ENCODE measurements at regions of chr12 and their contacts with region 1.

Region 1: DNA sequence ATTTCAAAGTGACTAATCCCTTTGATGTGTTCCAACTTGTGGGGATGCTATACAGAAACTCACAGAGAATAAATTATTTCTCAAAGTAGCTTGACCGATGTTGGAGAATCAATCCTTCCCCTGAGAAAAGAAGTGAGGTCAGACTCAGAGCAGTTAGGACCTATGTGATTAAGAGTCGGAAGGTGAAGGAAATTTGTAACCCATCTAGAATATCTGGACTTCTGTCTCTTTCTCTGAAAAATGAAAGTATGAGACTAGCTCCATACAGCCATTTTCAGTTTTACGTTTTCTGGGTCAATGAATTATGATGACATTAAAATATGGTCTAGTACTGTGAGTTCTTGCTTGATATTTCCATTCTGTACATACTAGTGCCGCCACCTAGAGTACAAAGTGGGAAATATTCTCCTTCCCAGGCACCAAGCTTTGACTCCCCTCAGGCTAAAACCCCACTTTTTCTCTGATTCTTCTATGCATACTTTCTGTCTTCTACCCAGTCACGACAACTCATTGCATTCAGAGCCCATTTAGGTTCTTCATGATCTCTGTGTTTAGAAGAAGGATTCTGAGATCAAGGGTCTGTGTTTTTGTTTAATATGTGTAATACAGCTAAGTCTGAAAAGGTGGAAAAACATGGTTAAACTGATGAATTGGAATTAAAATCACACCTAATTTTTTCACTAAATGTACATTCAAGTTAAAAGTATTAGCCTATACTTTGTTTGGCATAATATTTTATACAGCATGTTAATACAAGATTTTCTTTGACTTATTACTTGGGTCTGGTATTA is 6.9 kb upstream of the NTS start:
- DNase-seq: no peak
- H3K4me3 ChIP-seq: no peak overlapping the region
- H3K27me3 ChIP-seq: no peaks in the 10 kb centered on the region
- CTCF ChIP-seq: peak; percentile 70

Region 2: GRCh38 chr12:85468356-85469157 is 398.6 kb before region 1 on chr12:
- CTCF ChIA-PET with region 1: interaction called, 49 read pairs
- POLR2A ChIA-PET with region 1: no interaction called
- DNase-seq: peak; percentile 10
- H3K4me3 ChIP-seq: peak overlapping the region; percentile 21
- H3K27me3 ChIP-seq: no peaks in the 10 kb centered on the region
- CTCF ChIP-seq: peak; percentile 84

Region 3: DNA sequence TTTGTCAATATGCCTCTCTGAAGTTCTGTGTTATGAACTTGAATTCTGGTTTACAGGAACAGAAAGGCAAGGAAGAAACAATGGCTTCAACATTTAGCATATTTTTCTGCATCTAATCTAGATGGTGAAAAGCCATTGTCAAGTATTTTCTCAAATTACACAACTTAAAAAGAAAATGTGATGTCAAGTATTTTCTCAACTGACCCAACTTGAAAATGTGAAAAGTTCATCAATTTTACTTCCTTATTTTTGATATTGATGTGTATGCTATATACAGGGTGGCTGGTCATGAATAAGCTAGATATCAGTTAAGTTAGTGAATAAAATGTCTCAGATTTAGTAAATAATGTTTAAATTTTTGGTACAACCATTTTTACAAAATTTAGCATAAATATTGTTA is 390.4 kb before region 1 on chr12:
- CTCF ChIA-PET with region 1: interaction called, 29 read pairs
- POLR2A ChIA-PET with region 1: no interaction called
- DNase-seq: no peak
- H3K4me3 ChIP-seq: no peak overlapping the region
- H3K27me3 ChIP-seq: no peaks in the 10 kb centered on the region
- CTCF ChIP-seq: no peak

Region 4: GRCh38 chr12:85484387-85484786 is 382.8 kb before region 1 on chr12:
- CTCF ChIA-PET with region 1: interaction called, 10 read pairs
- POLR2A ChIA-PET with region 1: no interaction called
- DNase-seq: no peak
- H3K4me3 ChIP-seq: no peak overlapping the region
- H3K27me3 ChIP-seq: no peaks in the 10 kb centered on the region
- CTCF ChIP-seq: no peak

Region 5: DNA sequence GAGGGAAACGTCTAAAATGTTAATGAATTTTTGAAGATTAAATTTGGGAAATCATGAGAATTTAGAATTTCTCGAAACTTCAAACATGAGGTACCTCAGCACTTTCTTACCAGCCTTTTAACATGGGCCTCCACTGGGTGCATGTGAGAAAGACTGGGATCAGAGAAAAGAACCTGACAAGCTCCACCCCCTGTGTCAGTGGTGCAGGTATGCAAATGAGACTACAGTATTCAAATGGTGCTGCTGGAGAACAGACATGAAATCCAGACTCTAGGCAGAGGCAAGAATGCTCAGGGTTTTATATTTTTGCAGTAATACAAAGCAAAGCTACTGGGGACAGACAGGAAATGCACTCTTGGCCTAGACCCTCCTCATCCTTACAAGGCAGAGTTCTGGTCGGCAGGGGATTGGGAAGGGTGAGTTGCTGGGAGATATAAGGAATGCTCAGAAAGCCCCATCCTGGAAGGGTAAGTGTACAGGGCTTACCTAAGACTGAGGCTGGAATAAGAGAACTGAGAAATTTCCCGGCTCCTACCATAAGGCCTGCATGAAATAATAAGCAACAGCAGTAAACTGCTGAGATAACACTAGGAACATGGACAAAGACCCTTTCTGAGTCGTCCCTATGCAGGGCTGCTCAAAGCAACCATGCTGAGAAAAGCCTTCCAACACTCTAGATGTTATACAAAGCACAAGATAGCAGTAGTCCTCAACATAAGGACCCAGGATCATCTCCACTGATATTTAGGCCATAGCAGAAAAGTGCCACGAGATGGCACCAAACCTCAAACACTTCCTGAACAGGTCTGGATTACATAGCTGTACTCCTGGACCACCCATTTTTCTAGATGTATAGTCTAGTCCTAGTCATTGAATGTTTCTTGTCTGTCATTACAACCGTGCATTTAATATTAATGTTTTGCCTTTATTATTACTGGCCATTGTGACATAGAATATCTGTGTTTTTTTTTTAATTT is 291.8 kb before region 1 on chr12:
- CTCF ChIA-PET with region 1: interaction called, 42 read pairs
- POLR2A ChIA-PET with region 1: interaction called, 3 read pairs
- DNase-seq: no peak
- H3K4me3 ChIP-seq: no peak overlapping the region
- H3K27me3 ChIP-seq: no peaks in the 10 kb centered on the region
- CTCF ChIP-seq: peak; percentile 83

Region 6: GRCh38 chr12:85725991-85726390 is 141.2 kb before region 1 on chr12:
- CTCF ChIA-PET with region 1: no interaction called
- POLR2A ChIA-PET with region 1: no interaction called
- DNase-seq: no peak
- H3K4me3 ChIP-seq: no peak overlapping the region
- H3K27me3 ChIP-seq: no peaks in the 10 kb centered on the region
- CTCF ChIP-seq: no peak

Region 7: DNA sequence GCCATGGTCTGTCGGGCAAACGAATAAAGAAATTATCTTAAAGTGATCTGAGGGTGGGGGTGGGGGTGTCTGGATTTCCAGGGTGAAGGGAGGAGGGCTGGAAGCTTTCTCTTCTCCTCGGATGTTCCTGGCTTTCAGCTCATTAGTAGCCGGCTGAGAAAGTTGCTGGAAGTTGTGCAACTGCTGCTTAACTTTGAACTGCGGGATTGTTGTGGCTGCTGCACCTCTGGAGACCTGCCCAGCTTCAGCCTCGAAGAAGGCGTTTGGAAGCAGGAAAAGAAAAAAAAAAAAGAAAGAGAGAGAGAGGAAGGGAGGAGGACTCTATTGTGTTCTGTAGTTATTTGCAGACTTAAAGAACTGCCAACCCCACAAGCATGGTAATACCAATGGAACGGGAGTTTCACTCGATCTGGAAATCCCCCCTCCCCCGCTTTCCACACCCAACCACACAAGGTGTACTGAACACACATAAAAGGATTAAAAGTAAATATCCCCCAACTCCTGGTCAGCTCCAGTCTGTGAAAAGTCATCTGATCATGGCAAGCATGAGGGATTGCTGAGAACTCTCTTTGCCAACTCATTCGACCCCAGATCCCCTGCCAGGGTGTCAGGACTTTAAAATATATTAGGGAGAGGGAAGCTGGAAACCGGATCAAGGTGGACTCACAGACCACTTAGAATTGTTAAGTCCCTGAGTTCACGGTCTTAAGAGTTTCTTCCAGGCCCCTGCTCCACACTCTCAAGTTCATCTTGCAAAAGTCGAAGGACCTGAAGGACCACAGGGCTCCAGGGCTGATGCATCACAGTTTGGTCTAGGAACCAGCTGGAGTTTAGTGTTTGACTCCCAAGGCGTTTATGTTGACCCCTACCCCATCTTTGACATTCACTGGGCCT is 30.7 kb before region 1 on chr12 and contains the start of gene RASSF9:
- CTCF ChIA-PET with region 1: interaction called, 13 read pairs
- POLR2A ChIA-PET with region 1: no interaction called
- DNase-seq: no peak
- H3K4me3 ChIP-seq: peak within 1 kb of the TSS; percentile 18
- H3K27me3 ChIP-seq: no peaks in the 10 kb centered on the region
- CTCF ChIP-seq: no peak
- polyA plus RNA-seq, gene RASSF9: 0.09 and 0.16 TPM in 2 replicates

Region 8: GRCh38 chr12:86015019-86015418 is 147.8 kb after region 1 on chr12:
- CTCF ChIA-PET with region 1: no interaction called
- POLR2A ChIA-PET with region 1: no interaction called
- DNase-seq: no peak
- H3K4me3 ChIP-seq: no peak overlapping the region
- H3K27me3 ChIP-seq: no peaks in the 10 kb centered on the region
- CTCF ChIP-seq: no peak